ENCODE measurements at regions of chr3 and their contacts with region 1.

Region 1: DNA sequence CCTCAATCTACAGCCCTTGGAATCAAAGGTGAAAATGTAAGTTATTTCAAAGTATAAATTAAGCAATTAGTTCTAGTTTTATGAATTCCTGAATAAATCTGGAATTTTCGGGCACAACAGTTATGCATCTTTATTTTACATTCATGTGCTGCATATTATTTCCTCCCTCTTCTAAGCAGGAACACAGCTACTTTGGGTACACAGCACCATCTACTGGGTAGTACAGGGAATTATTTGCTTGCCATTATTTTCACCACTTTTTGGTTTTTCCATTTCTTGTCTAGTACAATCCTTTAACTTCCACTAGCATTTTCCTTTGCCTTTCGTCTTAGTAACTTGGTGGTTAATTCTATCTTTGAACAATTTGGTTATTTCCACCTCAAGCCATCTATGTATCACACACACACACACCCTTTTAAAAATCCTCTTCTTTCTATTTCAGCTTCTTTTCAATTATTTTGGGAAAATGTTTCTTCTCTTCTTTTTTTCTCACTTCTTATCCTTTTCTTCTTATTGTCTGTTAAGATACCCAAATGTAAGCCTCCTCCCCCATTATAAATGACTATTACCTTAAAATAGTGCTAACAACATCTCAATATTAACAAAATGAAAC is 451.0 kb downstream of the MFSD1 start:
- ATAC-seq: peak in 5 of 8 experiments; percentile 25 to 44 (median 42)
- H3K4me3 ChIP-seq: no peak overlapping the region
- H3K27ac ChIP-seq: no peak overlapping the region
- H3K4me1 ChIP-seq: peaks cover 16 to 44% of the 10 kb centered on the region in 2 donors

Region 2: GRCh38 chr3:158845765-158846350 is 407.0 kb before region 1 on chr3:
- in situ Hi-C with region 1: loop called (anchors 5 to 25 kb)
- ATAC-seq: peak in 6 of 8 experiments; percentile 27 to 61 (median 45)
- H3K4me3 ChIP-seq: no peak overlapping the region
- H3K27ac ChIP-seq: no peak overlapping the region
- H3K4me1 ChIP-seq: peaks cover 29 to 44% of the 10 kb centered on the region in 2 donors

Region 3: GRCh38 chr3:158918008-158918407 is 334.9 kb before region 1 on chr3:
- in situ Hi-C with region 1: loop called in 3 of 9 experiments (anchors 10 to 25 kb)
- ATAC-seq: peak; percentile 82 to 98 (median 92)
- H3K4me3 ChIP-seq: no peak overlapping the region
- H3K27ac ChIP-seq: no peak overlapping the region
- H3K4me1 ChIP-seq: peaks cover 5 to 25% of the 10 kb centered on the region in 2 donors

Region 4: DNA sequence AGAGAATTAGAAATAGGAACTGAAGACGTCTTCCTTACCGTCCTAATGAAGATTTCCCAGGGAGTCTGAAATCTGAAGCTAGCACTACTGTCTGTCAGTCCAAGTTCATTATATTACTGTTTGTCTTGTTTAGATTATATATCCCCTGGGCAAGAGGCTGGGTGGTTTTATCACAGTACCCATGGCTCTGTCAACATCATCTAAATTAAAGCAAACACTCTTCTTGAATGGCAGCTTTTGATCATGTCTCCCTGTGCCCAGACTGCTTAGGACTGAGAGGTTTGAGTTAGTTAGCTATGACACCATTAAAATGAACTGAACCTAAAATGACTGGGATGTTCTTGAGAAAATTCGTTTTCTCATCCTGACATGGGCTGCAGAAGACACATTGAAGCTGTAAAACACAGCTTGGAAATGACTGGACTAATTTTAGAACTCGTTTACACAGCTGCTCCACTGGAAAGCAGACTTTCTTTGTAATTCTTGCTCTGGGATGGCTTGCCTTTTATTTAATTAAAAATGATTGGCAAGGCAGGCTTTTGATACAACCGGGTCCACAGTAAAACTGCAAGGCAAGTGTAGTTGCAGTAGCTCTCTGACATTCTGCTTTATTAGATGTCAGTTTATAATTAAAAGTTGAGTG is 207.5 kb before region 1 on chr3:
- in situ Hi-C with region 1: no loop called
- ATAC-seq: peak in 2 of 8 experiments; percentile 54 to 63
- H3K4me3 ChIP-seq: no peak overlapping the region
- H3K27ac ChIP-seq: no peak overlapping the region
- H3K4me1 ChIP-seq: peaks cover 0 to 5% of the 10 kb centered on the region in 2 donors